CD8-positive, alpha-beta T cell (primary cell): ENCODE measurements at regions of chr2 and their contacts with region 1.

Region 1: GRCh38 chr2:199880190-199880589 is 29.2 kb upstream of the FTCDNL1 start:
- DNase-seq: no peak
- ATAC-seq: no peak
- H3K4me3 ChIP-seq: no peak overlapping the region
- H3K4me3 Mint-ChIP-seq: no peak overlapping the region
- H3K27ac ChIP-seq: no peak overlapping the region
- H3K27ac Mint-ChIP-seq: no peak overlapping the region
- H3K4me1 ChIP-seq: no peaks in the 10 kb centered on the region
- H3K4me1 Mint-ChIP-seq: no peaks in the 10 kb centered on the region
- H3K27me3 ChIP-seq: peaks cover 0 to 3% of the 10 kb centered on the region in 2 experiments
- H3K27me3 Mint-ChIP-seq: peaks cover 26% of the 10 kb centered on the region
- CTCF ChIP-seq: no peak

Region 2: GRCh38 chr2:200021449-200022114 is 141.4 kb after region 1 on chr2:
- CTCF ChIA-PET with region 1: no interaction called
- POLR2A ChIA-PET with region 1: no interaction called
- intact Hi-C with region 1: loop called in 1 of 2 experiments (anchors 2 kb)
- DNase-seq: no peak
- ATAC-seq: no peak
- H3K4me3 ChIP-seq: no peak overlapping the region
- H3K4me3 Mint-ChIP-seq: no peak overlapping the region
- H3K27ac ChIP-seq: no peak overlapping the region
- H3K27ac Mint-ChIP-seq: no peak overlapping the region
- H3K4me1 ChIP-seq: no peaks in the 10 kb centered on the region
- H3K4me1 Mint-ChIP-seq: no peaks in the 10 kb centered on the region
- H3K27me3 ChIP-seq: no peaks in the 10 kb centered on the region
- H3K27me3 Mint-ChIP-seq: peaks cover 9% of the 10 kb centered on the region
- CTCF ChIP-seq: no peak